ENCODE measurements at regions of chr2 and their contacts with region 1.

Region 1: DNA sequence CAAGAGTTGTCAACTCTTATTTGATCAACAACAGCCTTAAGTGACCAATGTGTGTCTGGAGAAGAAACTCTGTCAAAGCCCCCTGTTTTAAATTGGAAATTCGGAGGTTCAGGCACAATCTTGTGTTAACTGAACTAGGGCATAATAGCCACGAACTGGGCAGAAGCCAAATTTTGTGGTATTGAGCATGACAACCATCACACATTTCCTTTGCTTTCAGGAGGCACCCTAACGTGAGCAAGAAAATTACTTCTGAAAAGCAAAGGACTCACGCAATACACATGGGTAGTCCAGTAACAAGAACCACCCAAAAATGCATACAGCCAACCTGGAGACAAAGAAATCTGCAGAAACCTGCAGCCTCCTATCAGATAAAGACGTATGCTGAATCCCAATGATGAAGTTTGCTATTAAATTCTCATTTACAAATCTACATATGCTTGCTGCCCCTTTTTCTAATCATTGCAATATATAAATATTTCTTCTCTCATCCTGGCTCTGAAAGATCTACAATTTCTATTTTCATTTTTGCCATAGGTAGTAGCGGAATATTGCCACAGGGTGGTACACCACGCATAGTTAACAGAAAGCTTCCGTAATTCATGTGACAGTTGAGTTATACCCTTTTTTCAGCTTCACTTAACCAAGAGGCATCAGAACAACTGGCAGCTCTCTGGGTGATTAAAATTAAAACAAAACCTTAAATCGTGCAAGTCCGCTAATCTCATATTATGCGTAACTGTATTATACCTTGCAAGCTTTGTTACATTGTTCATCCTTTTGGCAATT is 495.8 kb downstream of the NRXN1 start:
- DNase-seq: peak in 1 of 2 experiments; percentile 19
- H3K4me3 ChIP-seq: no peak overlapping the region
- H3K4me3 Mint-ChIP-seq: no peak overlapping the region
- H3K27ac Mint-ChIP-seq: no peak overlapping the region
- H3K4me1 ChIP-seq: no peaks in the 10 kb centered on the region
- H3K4me1 Mint-ChIP-seq: no peaks in the 10 kb centered on the region
- H3K27me3 ChIP-seq: no peaks in the 10 kb centered on the region
- H3K27me3 Mint-ChIP-seq: peaks cover 3% of the 10 kb centered on the region
- CTCF ChIP-seq: peak; percentile 31 to 57

Region 2: DNA sequence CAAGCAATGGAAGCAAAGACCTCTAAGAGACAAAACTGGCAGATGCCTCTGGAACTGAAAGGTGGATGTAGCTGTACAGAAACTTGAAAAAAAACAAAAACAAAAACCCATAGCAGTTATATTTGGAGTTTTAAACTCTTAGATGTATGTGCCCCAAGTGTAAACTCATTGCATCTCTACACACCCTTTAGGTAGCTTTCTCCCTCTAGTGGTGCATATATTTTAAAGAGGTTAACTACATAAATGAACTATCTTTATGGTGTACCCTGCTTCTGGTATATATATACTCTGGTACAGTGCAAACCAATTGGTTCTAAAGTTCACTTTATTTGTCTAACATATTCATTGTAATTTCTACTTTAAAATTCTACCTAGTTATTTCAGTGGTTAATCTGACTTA is 22.4 kb before region 1 on chr2:
- CTCF ChIA-PET with region 1: no interaction called
- POLR2A ChIA-PET with region 1: no interaction called
- intact Hi-C with region 1: no loop called
- DNase-seq: no peak
- H3K4me3 ChIP-seq: no peak overlapping the region
- H3K4me3 Mint-ChIP-seq: no peak overlapping the region
- H3K27ac Mint-ChIP-seq: no peak overlapping the region
- H3K4me1 ChIP-seq: no peaks in the 10 kb centered on the region
- H3K4me1 Mint-ChIP-seq: no peaks in the 10 kb centered on the region
- H3K27me3 ChIP-seq: no peaks in the 10 kb centered on the region
- H3K27me3 Mint-ChIP-seq: no peaks in the 10 kb centered on the region
- CTCF ChIP-seq: peak in 1 of 2 experiments; percentile 16

Region 3: DNA sequence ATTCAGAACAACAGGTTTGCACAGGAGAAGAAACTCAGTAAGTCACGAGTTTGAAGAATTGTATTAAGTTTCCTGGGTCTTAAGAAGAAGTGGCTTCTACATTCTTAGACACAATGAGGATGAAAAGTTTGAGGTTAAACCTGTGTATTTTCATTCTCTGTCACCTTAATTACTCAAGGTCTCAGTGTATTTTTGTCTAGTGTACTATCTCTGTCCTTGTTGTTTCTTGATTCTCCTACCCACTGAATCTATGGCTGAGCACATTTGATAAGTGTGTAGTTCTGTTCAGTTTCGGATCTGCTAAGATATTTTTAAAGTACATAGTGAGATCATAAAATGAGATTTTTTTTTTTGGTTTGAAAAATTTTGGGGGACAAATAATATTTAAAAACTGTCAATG is 35.1 kb after region 1 on chr2:
- CTCF ChIA-PET with region 1: no interaction called
- POLR2A ChIA-PET with region 1: no interaction called
- intact Hi-C with region 1: no loop called
- DNase-seq: no peak
- H3K4me3 ChIP-seq: no peak overlapping the region
- H3K4me3 Mint-ChIP-seq: no peak overlapping the region
- H3K27ac Mint-ChIP-seq: no peak overlapping the region
- H3K4me1 ChIP-seq: no peaks in the 10 kb centered on the region
- H3K4me1 Mint-ChIP-seq: no peaks in the 10 kb centered on the region
- H3K27me3 ChIP-seq: no peaks in the 10 kb centered on the region
- H3K27me3 Mint-ChIP-seq: no peaks in the 10 kb centered on the region
- CTCF ChIP-seq: no peak

Region 4: DNA sequence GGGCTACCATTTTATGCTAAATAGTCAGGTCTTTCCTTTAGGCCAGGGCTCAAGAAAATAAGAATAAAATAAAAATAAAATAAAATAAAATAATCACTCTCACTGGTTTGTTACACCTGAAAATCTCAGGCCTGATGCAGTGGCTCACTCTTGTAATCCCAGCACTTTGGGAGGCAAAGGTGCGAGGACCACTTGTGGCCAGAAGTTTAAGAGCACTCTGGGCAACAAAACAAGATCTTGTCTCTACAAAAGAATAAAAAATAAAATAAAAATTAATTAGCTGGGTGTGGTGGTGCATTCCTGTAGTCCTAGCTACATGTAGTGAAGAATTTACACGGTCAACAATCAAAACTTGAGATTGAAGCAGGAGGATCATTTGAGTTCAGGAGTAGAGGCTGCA is 336.4 kb after region 1 on chr2:
- CTCF ChIA-PET with region 1: no interaction called
- POLR2A ChIA-PET with region 1: no interaction called
- intact Hi-C with region 1: loop called (anchors 1 kb)
- DNase-seq: no peak
- H3K4me3 ChIP-seq: no peak overlapping the region
- H3K4me3 Mint-ChIP-seq: no peak overlapping the region
- H3K27ac Mint-ChIP-seq: no peak overlapping the region
- H3K4me1 ChIP-seq: no peaks in the 10 kb centered on the region
- H3K4me1 Mint-ChIP-seq: no peaks in the 10 kb centered on the region
- H3K27me3 ChIP-seq: no peaks in the 10 kb centered on the region
- H3K27me3 Mint-ChIP-seq: peaks cover 3% of the 10 kb centered on the region
- CTCF ChIP-seq: peak; percentile 20 to 61

Region 5: DNA sequence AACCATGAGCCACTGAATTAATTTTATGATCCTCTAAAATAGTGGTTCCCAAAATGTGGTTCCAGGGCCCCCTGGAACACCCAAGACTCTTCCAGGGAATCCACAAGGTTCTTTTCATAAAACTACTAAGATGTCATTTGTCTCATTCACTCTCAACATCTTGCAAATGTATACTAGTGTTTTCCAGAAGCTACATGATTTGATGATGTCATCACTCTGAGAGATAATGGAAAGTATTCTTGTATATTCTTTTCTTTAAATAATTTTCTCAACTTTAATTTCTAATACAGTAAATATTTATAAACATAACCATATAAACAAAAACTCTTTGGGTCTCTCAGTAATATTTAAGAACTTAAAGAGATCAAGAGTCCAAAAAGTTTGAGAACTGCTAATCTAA is 438.8 kb after region 1 on chr2:
- CTCF ChIA-PET with region 1: no interaction called
- POLR2A ChIA-PET with region 1: no interaction called
- intact Hi-C with region 1: no loop called
- DNase-seq: no peak
- H3K4me3 ChIP-seq: no peak overlapping the region
- H3K4me3 Mint-ChIP-seq: no peak overlapping the region
- H3K27ac Mint-ChIP-seq: no peak overlapping the region
- H3K4me1 ChIP-seq: no peaks in the 10 kb centered on the region
- H3K4me1 Mint-ChIP-seq: peaks cover 6% of the 10 kb centered on the region
- H3K27me3 ChIP-seq: no peaks in the 10 kb centered on the region
- H3K27me3 Mint-ChIP-seq: no peaks in the 10 kb centered on the region
- CTCF ChIP-seq: no peak

Region 6: GRCh38 chr2:51710222-51710621 is 1174.1 kb after region 1 on chr2:
- CTCF ChIA-PET with region 1: no interaction called
- POLR2A ChIA-PET with region 1: no interaction called
- intact Hi-C with region 1: loop called (anchors 5 kb)
- DNase-seq: peak; percentile 33 to 39
- H3K4me3 ChIP-seq: no peak overlapping the region
- H3K4me3 Mint-ChIP-seq: no peak overlapping the region
- H3K27ac Mint-ChIP-seq: no peak overlapping the region
- H3K4me1 ChIP-seq: no peaks in the 10 kb centered on the region
- H3K4me1 Mint-ChIP-seq: no peaks in the 10 kb centered on the region
- H3K27me3 ChIP-seq: no peaks in the 10 kb centered on the region
- H3K27me3 Mint-ChIP-seq: peaks cover 6% of the 10 kb centered on the region
- CTCF ChIP-seq: peak; percentile 20 to 49

Region 7: GRCh38 chr2:51981783-51982182 is 1445.6 kb after region 1 on chr2:
- CTCF ChIA-PET with region 1: no interaction called
- POLR2A ChIA-PET with region 1: no interaction called
- intact Hi-C with region 1: no loop called
- DNase-seq: no peak
- H3K4me3 ChIP-seq: no peak overlapping the region
- H3K4me3 Mint-ChIP-seq: no peak overlapping the region
- H3K27ac Mint-ChIP-seq: no peak overlapping the region
- H3K4me1 ChIP-seq: no peaks in the 10 kb centered on the region
- H3K4me1 Mint-ChIP-seq: no peaks in the 10 kb centered on the region
- H3K27me3 ChIP-seq: no peaks in the 10 kb centered on the region
- H3K27me3 Mint-ChIP-seq: no peaks in the 10 kb centered on the region
- CTCF ChIP-seq: no peak